ENCODE measurements at regions of chr12 and their contacts with region 1.

Region 1: GRCh38 chr12:68290126-68290525 is 36.7 kb upstream of the IL22 start:
- DNase-seq: peak; percentile 80
- H3K4me3 Mint-ChIP-seq: peak overlapping the region; percentile 19
- H3K27ac Mint-ChIP-seq: peak overlapping the region; percentile 55
- H3K4me1 Mint-ChIP-seq: peaks cover 43% of the 10 kb centered on the region
- H3K27me3 Mint-ChIP-seq: peaks cover 5% of the 10 kb centered on the region

Region 2: DNA sequence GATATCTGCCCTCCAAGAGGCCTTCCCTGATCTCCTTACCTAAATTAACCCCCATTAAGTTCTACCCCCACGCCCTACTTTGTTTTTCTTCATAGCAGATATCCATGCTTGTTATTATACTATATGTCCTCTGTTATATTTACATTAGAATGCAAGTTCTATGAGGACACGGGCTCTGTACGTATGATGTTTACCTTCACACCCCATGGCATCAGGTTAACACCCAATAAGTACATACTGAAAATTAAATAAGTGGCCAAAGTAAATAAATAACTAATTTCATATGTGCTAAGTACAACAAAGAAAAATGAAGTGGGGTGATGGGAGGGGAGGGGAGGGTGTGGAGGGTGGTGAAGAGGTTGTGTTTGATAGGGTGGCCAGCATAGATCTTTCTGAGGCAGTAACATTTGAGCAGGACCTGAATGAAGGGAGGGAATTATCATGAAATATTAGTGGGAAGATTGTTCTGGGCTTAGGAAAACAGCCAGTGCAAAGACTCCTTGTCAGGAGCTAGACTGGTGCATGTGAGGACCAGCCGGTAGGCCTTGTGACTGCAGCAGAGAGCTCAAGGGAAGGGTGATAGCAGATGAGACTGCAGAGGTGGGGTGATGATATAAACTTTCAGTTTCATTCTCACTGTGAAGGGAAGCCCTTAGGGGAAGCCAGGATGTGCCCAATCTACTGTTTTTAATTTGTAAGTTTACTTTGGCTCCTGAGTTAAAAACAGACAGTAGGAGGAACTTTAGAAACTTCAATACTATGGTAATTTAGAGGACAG is 49.3 kb before region 1 on chr12:
- intact Hi-C with region 1: loop called (anchors 1 kb)
- DNase-seq: peak; percentile 89
- H3K4me3 Mint-ChIP-seq: peak overlapping the region; percentile 70
- H3K27ac Mint-ChIP-seq: peak overlapping the region; percentile 88
- H3K4me1 Mint-ChIP-seq: peaks cover 54% of the 10 kb centered on the region
- H3K27me3 Mint-ChIP-seq: peaks cover 3% of the 10 kb centered on the region

Region 3: DNA sequence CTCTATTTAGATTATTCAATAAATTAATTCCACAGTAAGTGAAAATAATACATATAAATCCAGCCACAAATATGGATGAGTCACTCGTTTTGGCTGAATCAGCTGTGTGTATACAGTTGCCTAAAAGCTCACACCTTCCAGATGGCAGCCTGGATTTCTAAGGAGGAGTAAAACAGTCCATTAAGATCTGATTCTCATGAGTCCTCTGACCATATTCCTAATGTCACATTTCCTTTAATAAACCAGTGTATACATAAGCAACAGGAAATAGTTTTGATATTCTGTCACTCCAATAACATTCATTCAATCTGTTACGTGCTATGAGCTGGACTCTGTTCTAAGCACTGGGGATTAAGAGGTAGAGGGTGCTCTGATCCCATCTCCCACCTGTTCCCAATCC is 20.2 kb after region 1 on chr12:
- intact Hi-C with region 1: loop called (anchors 1 kb)
- DNase-seq: no peak
- H3K4me3 Mint-ChIP-seq: no peak overlapping the region
- H3K27ac Mint-ChIP-seq: no peak overlapping the region
- H3K4me1 Mint-ChIP-seq: peaks cover 16% of the 10 kb centered on the region
- H3K27me3 Mint-ChIP-seq: no peaks in the 10 kb centered on the region